WTC11 (cell line): ENCODE measurements at regions of chrX and their contacts with region 1.

Region 1: DNA sequence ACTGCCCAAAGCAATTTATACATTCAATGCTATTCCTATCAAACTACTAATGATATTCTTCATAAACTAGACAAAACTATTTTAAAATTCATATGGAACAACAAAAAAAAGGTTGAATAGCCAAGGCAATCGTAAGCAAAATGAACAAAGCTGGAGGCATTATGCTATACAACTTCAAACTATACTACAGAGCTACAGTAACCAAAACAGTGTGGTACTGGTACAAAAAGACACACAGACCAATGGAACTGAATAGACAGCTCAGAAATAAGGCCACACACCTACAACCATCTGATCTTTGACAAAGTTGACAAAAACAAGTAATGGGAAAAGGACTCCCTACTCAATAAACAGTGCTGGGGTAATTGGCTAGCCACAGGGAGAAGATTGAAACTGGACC is 67.0 kb downstream of the FGF16 start:
- DNase-seq: no peak
- ATAC-seq: no peak
- H3K4me3 Mint-ChIP-seq: no peak overlapping the region
- H3K27ac Mint-ChIP-seq: no peak overlapping the region
- H3K4me1 Mint-ChIP-seq: no peaks in the 10 kb centered on the region
- H3K27me3 Mint-ChIP-seq: no peaks in the 10 kb centered on the region
- CTCF ChIP-seq: no peak

Region 2: DNA sequence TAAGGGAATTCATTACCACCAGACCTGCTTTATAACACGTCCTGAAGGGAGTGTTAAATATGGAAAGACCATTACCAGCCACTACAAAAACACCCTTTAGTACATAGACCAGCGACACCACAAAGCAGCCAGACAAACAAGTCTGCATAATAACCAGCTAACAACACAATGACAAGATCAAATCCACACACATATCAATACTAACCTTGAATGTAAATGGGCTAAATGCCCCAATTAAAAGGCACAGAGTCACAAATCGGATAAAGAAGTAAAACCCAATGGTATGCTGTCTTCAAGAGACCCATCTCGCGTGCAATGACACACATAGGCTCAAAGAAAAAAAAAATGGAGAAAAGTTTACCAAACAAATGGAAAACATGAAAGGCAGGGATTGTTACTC is 30.1 kb before region 1 on chrX:
- CTCF ChIA-PET with region 1: no interaction called
- POLR2A ChIA-PET with region 1: interaction called, 10 read pairs
- DNase-seq: no peak
- ATAC-seq: no peak
- H3K4me3 Mint-ChIP-seq: no peak overlapping the region
- H3K27ac Mint-ChIP-seq: no peak overlapping the region
- H3K4me1 Mint-ChIP-seq: no peaks in the 10 kb centered on the region
- H3K27me3 Mint-ChIP-seq: peaks cover 4% of the 10 kb centered on the region; the same call in 1 of the 2 replicates
- CTCF ChIP-seq: no peak